Mammary epithelial cell (primary cell): ENCODE measurements at regions of chr11 and their contacts with region 1.

Region 1: DNA sequence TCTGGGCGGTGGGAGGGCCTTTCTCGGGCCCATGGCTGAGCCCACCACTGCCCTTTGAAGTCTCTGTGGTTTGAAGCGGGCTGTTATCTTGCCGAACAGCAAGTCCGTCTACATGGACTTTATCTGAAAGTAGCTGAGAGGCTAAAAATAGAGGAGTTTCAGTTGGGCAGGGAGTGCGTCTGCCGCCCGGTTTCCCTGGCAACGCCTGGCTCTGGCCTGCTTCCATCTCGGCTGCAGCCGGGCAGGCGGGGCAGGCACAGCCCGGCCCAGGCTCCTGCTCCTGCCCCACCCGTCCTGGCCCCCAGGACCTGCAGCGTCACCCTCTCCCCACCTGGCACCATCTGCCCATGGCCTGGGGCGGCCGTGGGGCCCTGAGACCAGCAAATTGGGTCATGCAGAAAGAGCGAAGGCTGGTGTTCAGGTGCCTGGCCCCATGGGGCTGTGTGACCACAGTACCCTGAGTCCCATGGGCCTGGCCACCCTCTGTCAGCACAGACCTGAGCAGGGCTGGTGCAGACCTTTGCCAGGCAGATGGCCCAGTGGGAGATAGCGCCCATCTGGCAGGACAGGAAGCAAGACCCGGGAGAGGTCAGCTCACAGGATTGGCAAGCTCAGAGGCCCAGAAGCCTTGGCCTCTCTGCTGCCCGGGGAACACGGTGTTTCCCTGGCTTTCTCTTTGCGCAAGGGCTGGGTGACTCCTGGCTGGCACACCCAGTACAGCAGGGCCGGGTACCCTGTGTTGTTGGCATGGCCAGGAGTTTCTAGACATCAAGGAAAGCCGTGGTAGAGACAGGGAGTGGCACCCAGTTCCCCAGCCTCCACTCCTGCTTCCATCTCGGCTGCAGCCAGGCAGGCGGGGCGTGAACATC is 79.1 kb upstream of the KCNQ1OT1 start:
- DNase-seq: peak; percentile 30
- H3K4me3 ChIP-seq: no peak overlapping the region
- H3K27ac ChIP-seq: no peak overlapping the region
- H3K4me1 ChIP-seq: peaks cover 15% of the 10 kb centered on the region
- H3K27me3 ChIP-seq: peaks cover 6% of the 10 kb centered on the region
- CTCF ChIP-seq: peak in 1 of 2 donors; percentile 57

Region 2: GRCh38 chr11:2681408-2682145 is 97.3 kb before region 1 on chr11:
- CTCF ChIA-PET with region 1: no interaction called
- dilution Hi-C with region 1: loop called (anchors 5 kb)
- in situ Hi-C with region 1: no loop called
- intact Hi-C with region 1: no loop called
- DNase-seq: no peak
- H3K4me3 ChIP-seq: no peak overlapping the region
- H3K27ac ChIP-seq: no peak overlapping the region
- H3K4me1 ChIP-seq: no peaks in the 10 kb centered on the region
- H3K27me3 ChIP-seq: no peaks in the 10 kb centered on the region
- CTCF ChIP-seq: no peak

Region 3: GRCh38 chr11:2761131-2762030 is 17.5 kb before region 1 on chr11:
- CTCF ChIA-PET with region 1: no interaction called
- dilution Hi-C with region 1: no loop called
- in situ Hi-C with region 1: no loop called
- intact Hi-C with region 1: no loop called
- DNase-seq: no peak
- H3K4me3 ChIP-seq: no peak overlapping the region
- H3K27ac ChIP-seq: no peak overlapping the region
- H3K4me1 ChIP-seq: no peaks in the 10 kb centered on the region
- H3K27me3 ChIP-seq: peaks cover 4% of the 10 kb centered on the region
- CTCF ChIP-seq: no peak

Region 4: DNA sequence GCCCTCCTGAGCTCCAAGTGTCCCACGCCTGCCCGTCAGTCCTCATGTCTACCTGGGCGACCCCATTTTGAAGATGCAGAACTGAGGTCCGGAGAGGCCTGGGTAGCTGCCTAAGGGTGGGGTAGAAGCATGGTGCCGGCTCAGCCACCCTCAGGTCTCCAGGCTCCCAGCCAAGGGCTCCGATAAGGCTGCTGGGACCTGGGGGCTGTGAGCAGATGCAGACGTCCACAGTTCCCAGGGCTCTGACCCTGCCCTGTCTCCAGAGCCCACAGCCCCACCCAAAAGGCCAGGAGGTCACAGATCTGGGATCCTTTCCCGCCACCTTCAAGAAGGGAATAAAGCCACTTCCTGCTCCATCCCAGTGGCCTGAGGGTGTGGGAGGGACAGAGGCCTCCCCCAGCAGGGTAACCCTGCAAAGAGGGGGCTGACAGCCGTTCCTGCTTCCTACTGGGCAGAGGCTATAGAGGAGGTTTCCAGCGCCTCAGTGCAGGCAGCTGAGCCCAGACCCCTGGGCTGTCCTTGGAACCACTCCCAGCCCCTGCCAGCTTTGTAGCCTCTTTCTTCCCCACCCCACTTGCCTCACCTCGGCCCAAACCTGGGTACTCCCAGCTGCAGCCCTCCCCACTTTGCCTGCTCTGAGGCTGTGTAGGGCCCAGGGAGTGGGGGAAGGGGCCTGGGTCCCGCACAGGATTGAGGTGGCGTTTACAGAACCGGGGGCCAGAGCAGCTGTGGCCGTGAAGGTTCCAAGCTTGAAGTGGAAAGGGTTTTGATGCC is 21.2 kb after region 1 on chr11:
- CTCF ChIA-PET with region 1: no interaction called
- dilution Hi-C with region 1: no loop called
- in situ Hi-C with region 1: no loop called
- intact Hi-C with region 1: no loop called
- DNase-seq: no peak
- H3K4me3 ChIP-seq: no peak overlapping the region
- H3K27ac ChIP-seq: no peak overlapping the region
- H3K4me1 ChIP-seq: peaks cover 18% of the 10 kb centered on the region
- H3K27me3 ChIP-seq: peaks cover 3% of the 10 kb centered on the region
- CTCF ChIP-seq: no peak

Region 5: GRCh38 chr11:2885676-2886081 is 106.8 kb after region 1 on chr11 and contains the start of gene CDKN1C:
- CTCF ChIA-PET with region 1: no interaction called
- dilution Hi-C with region 1: no loop called
- in situ Hi-C with region 1: no loop called
- intact Hi-C with region 1: no loop called
- DNase-seq: peak; percentile 65
- H3K4me3 ChIP-seq: peak within 1 kb of the TSS; percentile 35 to 63 (median 54)
- H3K27ac ChIP-seq: no peak within 1 kb of the TSS
- H3K4me1 ChIP-seq: peaks cover 17% of the 10 kb centered on the region
- H3K27me3 ChIP-seq: peaks cover 19% of the 10 kb centered on the region
- CTCF ChIP-seq: no peak
- total RNA-seq, gene CDKN1C: 0.38 to 0.50 TPM

Region 6: DNA sequence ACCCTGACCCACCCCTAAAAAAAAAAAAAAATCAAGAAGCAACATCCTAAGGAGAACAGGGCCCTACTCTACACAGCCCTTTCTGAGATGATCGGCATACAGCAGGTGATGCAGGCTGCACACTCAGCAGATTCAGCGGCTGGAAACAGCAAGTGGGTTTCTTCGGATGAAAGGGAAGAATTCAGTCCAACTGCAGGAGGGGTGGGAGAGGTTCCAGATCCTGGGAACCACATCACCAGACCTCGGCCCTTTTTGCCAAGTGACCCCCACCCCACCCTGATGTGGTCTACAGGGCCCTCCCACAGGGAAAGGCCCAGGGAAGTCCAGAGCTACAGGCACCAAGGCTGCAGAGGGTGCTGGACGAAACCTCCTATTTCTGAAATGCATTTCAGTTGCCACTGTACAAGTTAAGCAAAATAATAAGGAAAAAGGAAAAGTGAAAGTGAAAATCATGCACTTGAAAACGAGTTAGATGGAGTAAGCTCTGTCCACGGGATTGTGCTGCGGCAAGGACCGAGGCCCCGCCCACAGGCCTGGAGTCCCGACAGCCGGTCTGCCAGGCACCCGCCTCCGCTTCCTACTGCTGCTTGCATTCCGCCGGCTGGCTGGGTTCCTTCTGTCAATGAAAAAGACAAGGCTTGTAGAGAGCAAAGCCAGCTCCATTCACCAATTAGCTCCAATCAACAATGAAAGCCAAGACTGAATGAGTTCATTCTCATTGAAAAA is 166.3 kb after region 1 on chr11:
- CTCF ChIA-PET with region 1: no interaction called
- dilution Hi-C with region 1: no loop called
- in situ Hi-C with region 1: no loop called
- intact Hi-C with region 1: no loop called
- DNase-seq: peak; percentile 62
- H3K4me3 ChIP-seq: no peak overlapping the region
- H3K27ac ChIP-seq: no peak overlapping the region
- H3K4me1 ChIP-seq: peaks cover 35% of the 10 kb centered on the region
- H3K27me3 ChIP-seq: no peaks in the 10 kb centered on the region
- CTCF ChIP-seq: no peak